CD8-positive, alpha-beta T cell (primary cell): ENCODE measurements at regions of chr18 and their contacts with region 1.

Region 1: GRCh38 chr18:42545825-42546224 is 569.7 kb downstream of the RIT2 start:
- DNase-seq: no peak
- ATAC-seq: no peak
- H3K4me3 ChIP-seq: no peak overlapping the region
- H3K4me3 Mint-ChIP-seq: no peak overlapping the region
- H3K27ac ChIP-seq: no peak overlapping the region
- H3K27ac Mint-ChIP-seq: no peak overlapping the region
- H3K4me1 ChIP-seq: no peaks in the 10 kb centered on the region
- H3K4me1 Mint-ChIP-seq: no peaks in the 10 kb centered on the region
- H3K27me3 ChIP-seq: no peaks in the 10 kb centered on the region
- H3K27me3 Mint-ChIP-seq: no peaks in the 10 kb centered on the region
- CTCF ChIP-seq: no peak

Region 2: GRCh38 chr18:42606886-42607495 is 61.2 kb after region 1 on chr18:
- CTCF ChIA-PET with region 1: no interaction called
- POLR2A ChIA-PET with region 1: no interaction called
- intact Hi-C with region 1: loop called in 1 of 2 experiments (anchors 10 kb)
- DNase-seq: no peak
- ATAC-seq: no peak
- H3K4me3 ChIP-seq: no peak overlapping the region
- H3K4me3 Mint-ChIP-seq: no peak overlapping the region
- H3K27ac ChIP-seq: no peak overlapping the region
- H3K27ac Mint-ChIP-seq: no peak overlapping the region
- H3K4me1 ChIP-seq: no peaks in the 10 kb centered on the region
- H3K4me1 Mint-ChIP-seq: no peaks in the 10 kb centered on the region
- H3K27me3 ChIP-seq: no peaks in the 10 kb centered on the region
- H3K27me3 Mint-ChIP-seq: no peaks in the 10 kb centered on the region
- CTCF ChIP-seq: no peak

Region 3: DNA sequence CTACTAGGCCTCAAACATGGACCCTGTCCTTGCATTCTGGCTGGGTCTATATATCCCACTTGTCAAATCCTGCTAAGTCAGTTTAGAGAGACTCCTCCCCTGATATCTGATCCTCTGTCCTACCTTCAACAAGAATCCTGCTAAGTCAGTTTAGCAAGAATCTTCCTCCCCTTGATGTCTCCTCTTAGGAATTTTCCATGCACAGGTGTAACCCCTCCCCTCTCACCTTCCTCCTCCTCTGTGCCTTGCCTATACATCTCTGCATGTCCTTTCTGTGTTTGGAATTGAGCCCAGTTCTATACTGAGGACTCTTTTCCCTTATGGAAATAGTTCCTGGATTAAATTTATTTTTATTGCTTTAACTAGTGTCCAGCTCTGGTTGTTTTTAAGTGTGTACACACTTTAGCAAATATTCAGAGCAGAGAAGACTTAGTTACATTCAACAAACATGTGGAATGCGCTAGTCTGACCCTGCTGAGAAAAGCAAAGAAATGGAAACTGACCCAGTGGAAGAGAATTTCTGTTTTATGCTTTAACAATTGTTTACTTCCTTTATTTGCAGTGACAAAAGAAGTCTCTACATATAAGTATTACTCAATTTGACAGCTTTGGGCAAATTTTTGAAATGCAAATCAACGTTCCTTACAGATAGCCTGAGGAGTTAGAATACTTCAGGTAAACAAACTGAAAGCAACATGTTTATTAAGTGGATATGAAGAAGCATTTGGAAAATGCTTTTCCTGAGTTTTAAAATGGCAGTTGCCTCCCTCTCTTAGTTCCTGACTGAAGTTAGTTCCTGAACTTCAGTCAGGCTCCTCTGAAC is 489.1 kb after region 1 on chr18:
- CTCF ChIA-PET with region 1: no interaction called
- POLR2A ChIA-PET with region 1: no interaction called
- intact Hi-C with region 1: no loop called
- DNase-seq: no peak
- ATAC-seq: no peak
- H3K4me3 ChIP-seq: no peak overlapping the region
- H3K4me3 Mint-ChIP-seq: no peak overlapping the region
- H3K27ac ChIP-seq: no peak overlapping the region
- H3K27ac Mint-ChIP-seq: no peak overlapping the region
- H3K4me1 ChIP-seq: no peaks in the 10 kb centered on the region
- H3K4me1 Mint-ChIP-seq: no peaks in the 10 kb centered on the region
- H3K27me3 ChIP-seq: no peaks in the 10 kb centered on the region
- H3K27me3 Mint-ChIP-seq: no peaks in the 10 kb centered on the region
- CTCF ChIP-seq: no peak